ENCODE measurements at regions of chr22 and their contacts with region 1.

Region 1: DNA sequence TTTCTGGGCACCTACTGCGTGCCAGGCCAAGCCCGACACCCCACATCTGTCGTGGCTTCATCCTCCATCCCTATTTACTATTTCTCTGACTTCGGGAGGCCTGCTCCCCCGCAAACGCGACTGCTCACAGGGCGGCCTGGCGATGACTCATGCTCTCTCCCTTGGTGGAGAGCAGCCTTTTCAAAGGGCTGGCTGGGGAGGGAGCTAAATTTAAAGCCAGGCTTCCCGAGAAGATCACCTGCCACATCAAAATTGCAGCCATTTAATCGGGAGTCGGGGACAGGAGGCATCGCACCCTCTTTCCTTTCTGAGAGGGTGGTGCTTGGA is 24.9 kb upstream of the SHISAL1 start:
- DNase-seq: peak; percentile 61 to 66
- H3K4me3 ChIP-seq: no peak overlapping the region
- H3K27ac ChIP-seq: no peak overlapping the region
- H3K4me1 ChIP-seq: peaks cover 35% of the 10 kb centered on the region
- H3K27me3 ChIP-seq: peaks cover 2% of the 10 kb centered on the region; the same call in 1 of the 2 replicates
- CTCF ChIP-seq: no peak

Region 2: DNA sequence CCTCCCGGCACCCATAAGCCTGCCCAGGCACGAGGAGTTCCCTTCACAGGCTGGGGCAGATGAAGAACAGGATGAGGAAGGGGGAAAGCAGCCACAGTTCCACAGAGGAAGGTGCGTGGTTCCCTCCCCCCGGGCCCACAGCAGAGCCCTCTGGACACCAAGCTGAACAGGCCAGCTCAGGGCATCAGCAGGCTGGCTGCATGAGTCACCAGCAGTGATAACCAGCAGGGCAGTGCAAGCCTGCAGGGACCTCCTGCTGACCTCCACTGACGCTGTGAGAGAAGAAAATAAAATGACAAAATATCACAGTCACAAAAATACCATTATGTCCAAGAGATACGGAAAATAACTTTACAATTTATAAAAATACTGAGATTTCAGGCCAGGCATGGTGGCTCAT is 148.9 kb after region 1 on chr22:
- CTCF ChIA-PET with region 1: no interaction called
- POLR2A ChIA-PET with region 1: no interaction called
- intact Hi-C with region 1: loop called (anchors 10 kb)
- DNase-seq: peak; percentile 57 to 77
- H3K4me3 ChIP-seq: no peak overlapping the region
- H3K27ac ChIP-seq: no peak overlapping the region
- H3K4me1 ChIP-seq: peaks cover 39% of the 10 kb centered on the region
- H3K27me3 ChIP-seq: no peaks in the 10 kb centered on the region
- CTCF ChIP-seq: no peak

Region 3: GRCh38 chr22:44550711-44551491 is 213.3 kb after region 1 on chr22:
- CTCF ChIA-PET with region 1: no interaction called
- POLR2A ChIA-PET with region 1: no interaction called
- intact Hi-C with region 1: loop called (anchors 5 kb)
- DNase-seq: peak; percentile 80 to 93
- H3K4me3 ChIP-seq: peak overlapping the region; percentile 51
- H3K27ac ChIP-seq: peak overlapping the region; percentile 95
- H3K4me1 ChIP-seq: peaks cover 30% of the 10 kb centered on the region
- H3K27me3 ChIP-seq: no peaks in the 10 kb centered on the region
- CTCF ChIP-seq: no peak

Region 4: DNA sequence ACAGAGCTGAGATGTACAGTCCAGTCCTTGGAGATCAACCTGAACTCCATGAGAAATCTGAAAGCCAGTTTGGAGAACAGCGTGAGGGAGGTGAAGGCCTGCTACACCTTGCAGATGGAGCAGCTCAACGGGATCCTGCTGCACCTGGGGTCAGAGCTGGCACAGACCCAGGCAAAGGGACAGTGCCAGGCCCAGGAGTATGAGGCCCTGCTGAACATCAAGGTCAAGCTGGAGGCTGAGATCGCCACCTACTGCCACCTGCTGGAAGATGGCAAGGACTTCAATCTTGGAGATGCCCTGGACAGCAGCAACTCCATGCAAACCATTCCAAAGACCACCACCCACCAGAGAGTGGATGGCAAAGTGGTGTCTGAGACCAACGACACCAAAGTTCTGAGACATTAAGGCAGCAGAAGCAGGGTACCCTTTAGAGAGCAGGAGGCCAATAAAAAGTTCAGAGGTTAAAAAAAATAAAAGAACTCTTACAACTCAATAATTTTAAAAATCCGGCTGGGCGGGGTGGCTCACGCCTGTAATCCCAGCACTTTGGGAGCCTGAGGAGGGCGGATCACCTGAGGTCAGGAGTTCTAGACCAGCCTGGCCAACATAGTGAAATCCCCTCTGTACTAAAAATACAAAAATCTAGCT is 230.3 kb after region 1 on chr22:
- CTCF ChIA-PET with region 1: no interaction called
- POLR2A ChIA-PET with region 1: no interaction called
- intact Hi-C with region 1: loop called (anchors 5 kb)
- DNase-seq: no peak
- H3K4me3 ChIP-seq: no peak overlapping the region
- H3K27ac ChIP-seq: no peak overlapping the region
- H3K4me1 ChIP-seq: no peaks in the 10 kb centered on the region
- H3K27me3 ChIP-seq: no peaks in the 10 kb centered on the region
- CTCF ChIP-seq: peak; percentile 87